HCT116 (cell line): ENCODE measurements at regions of chr5 and their contacts with region 1.

Region 1: DNA sequence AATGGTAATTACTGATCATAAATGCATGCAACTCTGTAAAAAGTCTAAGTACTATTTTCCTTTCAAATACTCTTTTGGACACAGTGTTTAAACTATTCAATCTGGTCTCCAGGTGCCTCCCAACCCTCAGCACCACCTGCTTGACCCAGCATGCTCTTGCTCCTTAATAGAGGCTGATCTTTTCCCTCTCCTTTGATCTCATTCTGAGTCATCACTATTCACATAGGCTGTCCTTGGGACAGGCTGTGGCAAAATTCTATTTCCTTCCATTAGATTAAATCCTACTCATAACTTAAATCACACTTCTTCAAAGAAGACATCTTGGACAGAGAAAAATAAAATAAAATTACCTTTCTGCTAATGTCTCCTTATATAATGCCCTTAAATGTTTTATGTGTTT is 199.4 kb upstream of the ST8SIA4 start:
- DNase-seq: peak; percentile 15
- ATAC-seq: peak; percentile 83
- H3K4me3 ChIP-seq: no peak overlapping the region
- H3K27ac ChIP-seq: no peak overlapping the region
- H3K4me1 ChIP-seq: peaks cover 0 to 7% of the 10 kb centered on the region in 2 experiments; a peak in 2 of 4 replicates
- H3K27me3 ChIP-seq: no peaks in the 10 kb centered on the region
- CTCF ChIP-seq: no peak
- POLR2A ChIP-seq: no peak
- RAD21 ChIP-seq: no peak

Region 2: GRCh38 chr5:101112645-101113044 is 10.1 kb after region 1 on chr5:
- CTCF ChIA-PET with region 1: no interaction called
- POLR2A ChIA-PET with region 1: no interaction called
- RAD21 ChIA-PET with region 1: no interaction called
- intact Hi-C with region 1: loop called (anchors 2 kb)
- DNase-seq: no peak
- ATAC-seq: no peak
- H3K4me3 ChIP-seq: no peak overlapping the region
- H3K27ac ChIP-seq: no peak overlapping the region
- H3K4me1 ChIP-seq: no peaks in the 10 kb centered on the region
- H3K27me3 ChIP-seq: no peaks in the 10 kb centered on the region
- CTCF ChIP-seq: no peak
- POLR2A ChIP-seq: no peak
- RAD21 ChIP-seq: no peak